Activated CD4-positive, alpha-beta T cell treated with anti-CD3 and anti-CD28 coated beads for 36 hours (primary cell): ENCODE measurements at regions of chr1 and their contacts with region 1.

Region 1: DNA sequence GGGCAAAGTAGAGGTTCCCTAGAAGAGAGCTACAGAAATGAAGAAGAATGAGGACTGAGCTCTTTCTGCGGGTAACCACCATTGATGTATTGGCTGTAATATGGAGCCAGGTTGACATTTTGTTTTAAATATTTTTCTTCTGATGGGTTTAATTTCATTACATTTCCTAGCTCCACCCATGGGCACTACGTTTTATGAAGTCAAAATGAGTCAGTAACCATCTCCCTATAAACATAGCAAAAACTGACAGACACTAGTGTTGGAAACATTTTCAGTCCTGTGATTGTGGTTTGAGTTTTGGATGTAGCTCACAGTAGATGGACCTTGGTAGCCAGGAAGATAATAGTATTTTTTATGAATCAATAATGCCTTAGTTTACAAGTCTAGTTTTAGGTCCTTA is 470.4 kb upstream of the B3GALT2 start:
- DNase-seq: no peak
- ATAC-seq: no peak
- H3K4me3 Mint-ChIP-seq: no peak overlapping the region
- H3K27ac Mint-ChIP-seq: no peak overlapping the region
- H3K4me1 Mint-ChIP-seq: no peaks in the 10 kb centered on the region
- H3K27me3 Mint-ChIP-seq: no peaks in the 10 kb centered on the region

Region 2: DNA sequence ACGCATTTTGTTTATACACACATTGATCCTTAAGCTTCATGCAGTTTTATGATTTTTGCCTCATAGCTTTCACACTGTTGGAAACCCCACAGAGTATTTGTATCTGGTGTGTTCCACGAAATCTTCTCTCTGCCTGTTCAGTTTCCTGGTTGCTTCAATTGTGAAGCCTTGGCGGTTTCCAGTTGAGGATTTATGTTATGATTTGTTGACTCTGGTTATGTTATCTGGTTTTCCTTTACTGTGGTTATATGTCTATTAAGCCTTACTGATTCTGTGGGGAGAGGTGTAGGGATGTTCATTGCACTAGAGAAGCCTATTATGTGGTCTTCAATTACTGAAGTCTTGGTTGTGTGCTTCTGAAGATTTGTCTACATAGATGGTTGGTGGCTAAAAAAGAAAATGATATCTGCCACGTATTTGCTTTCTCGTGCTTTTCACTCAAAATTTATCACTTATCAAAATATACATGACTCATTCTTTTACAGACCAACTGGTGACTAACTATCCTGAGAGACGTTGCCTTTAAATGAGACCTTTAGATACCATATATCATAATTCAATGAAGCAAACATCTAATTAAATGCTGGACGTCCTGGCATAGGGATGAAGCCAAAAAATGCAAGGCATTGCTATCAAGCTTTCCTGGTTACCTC is 17.6 kb after region 1 on chr1:
- CTCF ChIA-PET with region 1: interaction called, 3 read pairs
- POLR2A ChIA-PET with region 1: no interaction called
- intact Hi-C with region 1: loop called in 1 of 2 experiments (anchors 2 kb)
- DNase-seq: no peak
- ATAC-seq: no peak
- H3K4me3 Mint-ChIP-seq: no peak overlapping the region
- H3K27ac Mint-ChIP-seq: no peak overlapping the region
- H3K4me1 Mint-ChIP-seq: peaks cover 4% of the 10 kb centered on the region
- H3K27me3 Mint-ChIP-seq: no peaks in the 10 kb centered on the region

Region 3: DNA sequence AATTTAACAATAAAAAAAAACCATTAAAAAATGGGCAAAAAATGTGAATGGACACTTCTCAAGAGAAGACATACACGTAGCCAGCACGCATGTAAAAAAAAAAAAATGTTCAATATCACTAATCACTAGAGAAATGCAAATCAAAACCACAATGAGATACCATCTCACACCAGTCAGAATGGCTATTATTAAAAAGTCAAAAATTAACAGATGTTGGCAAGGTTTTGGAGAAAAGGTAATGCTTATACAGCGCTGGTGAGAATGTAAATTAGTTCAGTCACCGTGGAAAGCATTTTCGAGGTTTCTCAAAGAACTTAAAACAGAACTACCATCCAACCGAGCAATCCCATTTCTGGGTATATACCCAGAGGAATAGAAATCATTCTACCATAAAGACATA is 621.1 kb after region 1 on chr1:
- CTCF ChIA-PET with region 1: no interaction called
- POLR2A ChIA-PET with region 1: no interaction called
- intact Hi-C with region 1: no loop called
- DNase-seq: no peak
- ATAC-seq: no peak
- H3K4me3 Mint-ChIP-seq: no peak overlapping the region
- H3K27ac Mint-ChIP-seq: no peak overlapping the region
- H3K4me1 Mint-ChIP-seq: peaks cover 8% of the 10 kb centered on the region
- H3K27me3 Mint-ChIP-seq: no peaks in the 10 kb centered on the region